Mammary epithelial cell (primary cell): ENCODE measurements at regions of chr1 and their contacts with region 1.

Region 1: DNA sequence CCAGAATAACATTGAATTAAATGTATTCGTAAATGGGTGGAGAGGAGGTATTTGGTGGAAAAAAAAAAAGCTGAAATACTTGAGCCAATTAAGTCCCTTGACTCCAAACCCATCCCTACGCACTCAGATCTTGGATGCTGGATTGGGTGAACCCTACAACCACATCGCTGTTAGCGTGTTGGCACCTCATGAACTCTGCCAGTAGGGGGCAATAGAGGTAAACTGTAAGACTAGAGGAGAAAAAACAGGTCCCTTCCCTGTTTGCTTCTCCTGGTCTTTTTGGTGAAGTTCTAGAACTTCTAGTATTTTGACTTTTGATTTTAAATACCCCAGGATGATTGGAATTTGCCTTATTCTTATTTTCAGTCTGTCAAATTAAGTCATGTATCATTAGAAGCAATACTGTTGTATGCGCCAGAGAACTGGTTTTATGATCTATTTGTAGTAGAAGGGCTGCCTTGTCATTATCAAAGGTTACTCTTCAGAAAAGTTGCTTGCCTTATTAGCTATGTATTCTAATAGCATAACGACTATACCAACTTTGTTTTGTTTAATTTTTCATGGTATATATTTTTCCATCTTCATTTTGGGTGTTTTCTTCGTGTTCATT is 1.9 kb upstream of the OR13G1 start:
- DNase-seq: peak; percentile 41
- H3K4me3 ChIP-seq: no peak overlapping the region
- H3K27ac ChIP-seq: no peak overlapping the region
- H3K4me1 ChIP-seq: no peaks in the 10 kb centered on the region
- H3K27me3 ChIP-seq: no peaks in the 10 kb centered on the region
- CTCF ChIP-seq: peak; percentile 52 to 69

Region 2: DNA sequence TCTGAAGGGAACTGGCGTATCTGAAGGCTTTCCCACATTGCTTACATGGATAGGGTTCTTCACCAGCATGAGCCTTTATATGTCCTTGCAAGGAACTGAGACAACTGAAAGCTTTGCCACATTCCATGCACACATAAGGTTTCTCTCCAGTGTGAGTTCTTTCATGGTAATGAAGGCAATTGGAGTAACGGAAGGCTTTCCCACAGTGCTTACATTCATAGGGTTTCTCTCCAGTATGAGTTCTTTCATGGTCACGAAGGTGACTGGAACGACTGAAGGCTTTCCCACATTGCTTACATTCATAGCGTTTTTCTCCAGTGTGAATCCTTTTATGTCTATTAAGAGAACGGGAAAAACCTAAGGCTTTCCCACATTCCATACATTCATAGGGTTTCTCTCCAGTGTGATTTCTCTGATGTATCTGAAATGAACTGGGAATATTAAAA is 524.6 kb before region 1 on chr1:
- CTCF ChIA-PET with region 1: no interaction called
- dilution Hi-C with region 1: no loop called
- in situ Hi-C with region 1: no loop called
- intact Hi-C with region 1: no loop called
- DNase-seq: no peak
- H3K4me3 ChIP-seq: no peak overlapping the region
- H3K27ac ChIP-seq: no peak overlapping the region
- H3K4me1 ChIP-seq: no peaks in the 10 kb centered on the region
- H3K27me3 ChIP-seq: no peaks in the 10 kb centered on the region
- CTCF ChIP-seq: no peak

Region 3: DNA sequence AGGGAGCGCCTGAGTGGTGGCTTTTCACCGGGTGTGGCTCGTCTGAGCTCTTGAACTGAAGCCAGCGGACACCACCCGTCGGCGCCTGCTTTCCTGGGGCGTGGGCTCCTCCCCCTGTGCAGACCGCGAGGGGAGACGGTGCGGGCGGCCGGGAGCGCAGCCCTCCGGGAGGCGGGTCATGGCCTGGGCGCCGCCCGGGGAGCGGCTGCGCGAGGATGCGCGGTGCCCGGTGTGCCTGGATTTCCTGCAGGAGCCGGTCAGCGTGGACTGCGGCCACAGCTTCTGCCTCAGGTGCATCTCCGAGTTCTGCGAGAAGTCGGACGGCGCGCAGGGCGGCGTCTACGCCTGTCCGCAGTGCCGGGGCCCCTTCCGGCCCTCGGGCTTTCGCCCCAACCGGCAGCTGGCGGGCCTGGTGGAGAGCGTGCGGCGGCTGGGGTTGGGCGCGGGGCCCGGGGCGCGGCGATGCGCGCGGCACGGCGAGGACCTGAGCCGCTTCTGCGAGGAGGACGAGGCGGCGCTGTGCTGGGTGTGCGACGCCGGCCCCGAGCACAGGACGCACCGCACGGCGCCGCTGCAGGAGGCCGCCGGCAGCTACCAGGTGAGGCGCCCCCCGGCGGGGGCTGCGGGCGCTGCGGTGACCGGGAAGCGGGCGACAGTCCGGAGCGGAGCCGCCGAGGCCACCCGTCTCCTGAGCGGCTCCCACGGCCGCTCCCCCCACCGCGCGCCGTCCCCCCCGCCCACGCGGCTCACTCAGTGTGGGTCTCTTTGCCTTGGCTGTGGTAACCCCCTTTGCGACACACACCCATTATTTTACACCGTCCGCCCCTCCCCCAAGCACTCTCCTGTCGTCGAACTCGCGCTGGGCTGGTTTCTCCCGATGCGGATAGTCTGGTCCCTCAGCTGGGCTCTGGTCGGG is 175.9 kb after region 1 on chr1 and contains the start of gene TRIM58:
- CTCF ChIA-PET with region 1: no interaction called
- dilution Hi-C with region 1: no loop called
- in situ Hi-C with region 1: no loop called
- intact Hi-C with region 1: loop called (anchors 5 kb)
- DNase-seq: peak; percentile 39
- H3K4me3 ChIP-seq: no peak within 1 kb of the TSS
- H3K27ac ChIP-seq: no peak within 1 kb of the TSS
- H3K4me1 ChIP-seq: no peaks in the 10 kb centered on the region
- H3K27me3 ChIP-seq: no peaks in the 10 kb centered on the region
- CTCF ChIP-seq: no peak
- total RNA-seq, gene TRIM58: 0.68 to 1.2 TPM

Region 4: DNA sequence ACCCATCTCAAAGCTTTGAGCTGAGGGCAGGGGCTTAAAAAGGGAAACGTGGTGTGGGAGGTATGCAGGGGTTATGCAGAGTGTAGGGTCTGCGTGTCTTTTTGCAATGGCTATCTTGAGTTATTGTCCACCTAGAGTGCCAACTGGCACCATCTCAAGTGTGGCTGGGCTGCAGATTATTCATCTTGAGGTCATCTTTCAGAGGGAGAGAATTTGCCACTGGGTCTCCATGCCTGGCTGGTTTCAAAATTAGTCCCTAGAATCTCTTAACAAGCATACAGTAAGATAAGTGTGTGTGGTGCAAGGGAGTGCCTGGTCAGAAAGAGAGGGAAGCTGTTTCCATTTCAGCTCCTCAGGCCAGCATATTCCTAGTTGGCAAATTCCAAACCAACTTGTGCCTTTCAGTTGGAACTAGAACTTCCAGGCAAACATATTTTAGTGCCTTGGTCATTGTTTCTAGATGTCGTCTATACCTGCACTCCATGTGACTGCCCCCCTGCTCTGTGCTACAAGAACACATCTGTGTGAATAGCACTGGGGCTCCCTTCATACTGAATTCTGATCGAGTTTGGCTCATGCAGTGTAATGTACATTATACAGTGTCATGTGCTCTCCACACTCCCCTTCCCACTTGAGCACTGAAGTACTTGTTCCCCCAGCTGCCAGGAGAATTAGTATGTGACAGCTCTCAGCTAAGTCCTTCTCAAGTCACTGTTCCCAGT is 233.7 kb after region 1 on chr1:
- CTCF ChIA-PET with region 1: no interaction called
- dilution Hi-C with region 1: no loop called
- in situ Hi-C with region 1: no loop called
- intact Hi-C with region 1: loop called (anchors 5 kb)
- DNase-seq: peak; percentile 3
- H3K4me3 ChIP-seq: no peak overlapping the region
- H3K27ac ChIP-seq: no peak overlapping the region
- H3K4me1 ChIP-seq: no peaks in the 10 kb centered on the region
- H3K27me3 ChIP-seq: no peaks in the 10 kb centered on the region
- CTCF ChIP-seq: no peak